Gastrocnemius medialis (tissue), 4 donors: ENCODE measurements at regions of chr17 and their contacts with region 1.

Region 1: GRCh38 chr17:69460963-69461922 is 46.7 kb downstream of the MAP2K6 start:
- DNase-seq: peak; percentile 77 to 85
- ATAC-seq: peak; percentile 72 to 74
- H3K4me3 ChIP-seq: peak overlapping the region; percentile 27 to 46 (median 40)
- H3K27ac ChIP-seq: peak overlapping the region; percentile 89 to 97 (median 94)
- H3K4me1 ChIP-seq: peaks cover 29 to 35% of the 10 kb centered on the region in 2 donors
- H3K27me3 ChIP-seq: no peaks in the 10 kb centered on the region
- CTCF ChIP-seq: no peak
- POLR2A ChIP-seq: peak; percentile 73 to 78

Region 2: GRCh38 chr17:68993112-68993511 is 468.1 kb before region 1 on chr17:
- in situ Hi-C with region 1: no loop called
- intact Hi-C with region 1: no loop called
- DNase-seq: no peak
- ATAC-seq: peak in 1 of 2 donors; percentile 24
- H3K4me3 ChIP-seq: no peak overlapping the region
- H3K27ac ChIP-seq: no peak overlapping the region
- H3K4me1 ChIP-seq: no peaks in the 10 kb centered on the region
- H3K27me3 ChIP-seq: no peaks in the 10 kb centered on the region
- CTCF ChIP-seq: no peak
- POLR2A ChIP-seq: no peak

Region 3: GRCh38 chr17:69335058-69335457 is 126.2 kb before region 1 on chr17:
- in situ Hi-C with region 1: no loop called
- intact Hi-C with region 1: no loop called
- DNase-seq: no peak
- ATAC-seq: peak; percentile 50 to 80
- H3K4me3 ChIP-seq: peak overlapping the region in 2 of 4 donors; percentile 22 to 27
- H3K27ac ChIP-seq: peak overlapping the region in 3 of 4 donors; percentile 60 to 97 (median 90)
- H3K4me1 ChIP-seq: peaks cover 0 to 17% of the 10 kb centered on the region in 2 donors
- H3K27me3 ChIP-seq: no peaks in the 10 kb centered on the region
- CTCF ChIP-seq: peak; percentile 66 to 82 (median 71)
- POLR2A ChIP-seq: no peak

Region 4: GRCh38 chr17:69350911-69351310 is 110.3 kb before region 1 on chr17:
- in situ Hi-C with region 1: no loop called
- intact Hi-C with region 1: loop called (anchors 2 kb)
- DNase-seq: peak; percentile 73 to 77
- ATAC-seq: peak; percentile 71 to 90
- H3K4me3 ChIP-seq: no peak overlapping the region
- H3K27ac ChIP-seq: peak overlapping the region; percentile 86 to 97 (median 90)
- H3K4me1 ChIP-seq: peaks cover 44 to 51% of the 10 kb centered on the region in 2 donors
- H3K27me3 ChIP-seq: no peaks in the 10 kb centered on the region
- CTCF ChIP-seq: no peak
- POLR2A ChIP-seq: peak; percentile 15 to 44

Region 5: DNA sequence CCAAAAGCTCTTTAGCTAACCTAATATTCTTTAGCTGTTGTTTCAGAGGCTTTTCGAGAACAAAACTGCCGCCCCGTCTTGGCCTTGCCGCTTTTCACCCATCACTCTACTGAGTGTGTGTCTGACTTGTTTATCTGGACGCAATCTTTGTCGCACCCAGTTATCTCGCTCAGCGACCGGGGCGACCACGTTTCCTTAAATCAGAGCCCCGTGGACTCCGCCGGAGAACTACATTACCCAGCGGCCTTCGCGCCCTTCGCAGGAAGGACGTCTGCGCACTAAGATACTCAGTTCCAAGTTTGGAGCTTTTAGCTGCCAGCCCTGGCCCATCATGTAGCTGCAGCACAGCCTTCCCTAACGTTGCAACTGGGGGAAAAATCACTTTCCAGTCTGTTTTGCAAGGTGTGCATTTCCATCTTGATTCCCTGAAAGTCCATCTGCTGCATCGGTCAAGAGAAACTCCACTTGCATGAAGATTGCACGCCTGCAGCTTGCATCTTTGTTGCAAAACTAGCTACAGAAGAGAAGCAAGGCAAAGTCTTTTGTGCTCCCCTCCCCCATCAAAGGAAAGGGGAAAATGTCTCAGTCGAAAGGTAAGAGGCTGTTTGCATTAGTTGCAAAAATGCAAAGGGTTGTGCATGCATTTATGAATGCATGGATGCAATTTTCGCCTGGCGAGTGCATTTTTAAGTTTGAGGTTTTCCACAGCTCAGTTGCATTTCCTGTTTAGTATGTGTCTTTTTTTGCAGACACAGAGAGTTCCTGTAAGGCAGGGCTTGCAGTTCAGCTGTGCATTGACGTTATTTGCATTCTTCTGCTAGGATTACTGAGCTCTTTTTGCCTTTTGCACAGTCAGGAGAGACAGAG is 46.6 kb before region 1 on chr17 and contains the start of gene MAP2K6:
- in situ Hi-C with region 1: no loop called
- intact Hi-C with region 1: no loop called
- DNase-seq: peak; percentile 78 to 83
- ATAC-seq: peak; percentile 86 to 91
- H3K4me3 ChIP-seq: peak within 1 kb of the TSS; percentile 60 to 94 (median 66)
- H3K27ac ChIP-seq: peak within 1 kb of the TSS; percentile 84 to 88 (median 86)
- H3K4me1 ChIP-seq: peaks cover 36 to 44% of the 10 kb centered on the region in 2 donors
- H3K27me3 ChIP-seq: no peaks in the 10 kb centered on the region
- CTCF ChIP-seq: no peak
- POLR2A ChIP-seq: peak; percentile 38 to 41
- total RNA-seq, gene MAP2K6: 35.1 to 351 (median 223) TPM

Region 6: DNA sequence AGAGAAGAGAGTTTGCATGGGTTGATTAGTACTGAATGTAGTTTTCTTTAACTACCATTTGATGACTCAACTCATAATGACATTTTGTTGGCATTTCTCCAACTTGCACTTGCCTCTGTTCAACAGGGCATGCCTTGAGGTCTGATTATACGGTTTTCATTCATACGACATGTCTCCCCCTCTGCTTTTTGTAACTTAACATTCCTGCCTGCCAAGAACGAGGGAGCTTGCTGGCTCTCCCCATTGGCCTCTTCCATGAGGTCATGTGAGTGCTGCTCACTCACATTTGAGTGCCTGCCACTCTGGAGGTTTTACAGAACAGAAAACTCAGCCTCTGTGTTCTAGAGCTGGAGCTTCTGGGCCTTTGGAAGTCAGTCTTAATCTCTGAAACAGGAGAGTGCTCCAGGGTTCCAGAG is 27.1 kb before region 1 on chr17:
- in situ Hi-C with region 1: no loop called
- intact Hi-C with region 1: no loop called
- DNase-seq: peak in 1 of 2 donors; percentile 37
- ATAC-seq: peak; percentile 69 to 72
- H3K4me3 ChIP-seq: no peak overlapping the region
- H3K27ac ChIP-seq: peak overlapping the region; percentile 48 to 70 (median 62)
- H3K4me1 ChIP-seq: peaks cover 30 to 33% of the 10 kb centered on the region in 2 donors
- H3K27me3 ChIP-seq: no peaks in the 10 kb centered on the region
- CTCF ChIP-seq: no peak
- POLR2A ChIP-seq: no peak

Region 7: GRCh38 chr17:69480245-69480644 is 19.0 kb after region 1 on chr17:
- in situ Hi-C with region 1: no loop called
- intact Hi-C with region 1: loop called (anchors 1 kb)
- DNase-seq: peak; percentile 90 to 96
- ATAC-seq: peak; percentile 96 to 97
- H3K4me3 ChIP-seq: peak overlapping the region; percentile 49 to 62 (median 56)
- H3K27ac ChIP-seq: peak overlapping the region; percentile 85 to 96 (median 95)
- H3K4me1 ChIP-seq: peaks cover 19 to 53% of the 10 kb centered on the region in 2 donors
- H3K27me3 ChIP-seq: no peaks in the 10 kb centered on the region
- CTCF ChIP-seq: no peak
- POLR2A ChIP-seq: peak; percentile 78 to 89